AG04449 (cell line): ENCODE measurements at regions of chr2 and their contacts with region 1.

Region 1: DNA sequence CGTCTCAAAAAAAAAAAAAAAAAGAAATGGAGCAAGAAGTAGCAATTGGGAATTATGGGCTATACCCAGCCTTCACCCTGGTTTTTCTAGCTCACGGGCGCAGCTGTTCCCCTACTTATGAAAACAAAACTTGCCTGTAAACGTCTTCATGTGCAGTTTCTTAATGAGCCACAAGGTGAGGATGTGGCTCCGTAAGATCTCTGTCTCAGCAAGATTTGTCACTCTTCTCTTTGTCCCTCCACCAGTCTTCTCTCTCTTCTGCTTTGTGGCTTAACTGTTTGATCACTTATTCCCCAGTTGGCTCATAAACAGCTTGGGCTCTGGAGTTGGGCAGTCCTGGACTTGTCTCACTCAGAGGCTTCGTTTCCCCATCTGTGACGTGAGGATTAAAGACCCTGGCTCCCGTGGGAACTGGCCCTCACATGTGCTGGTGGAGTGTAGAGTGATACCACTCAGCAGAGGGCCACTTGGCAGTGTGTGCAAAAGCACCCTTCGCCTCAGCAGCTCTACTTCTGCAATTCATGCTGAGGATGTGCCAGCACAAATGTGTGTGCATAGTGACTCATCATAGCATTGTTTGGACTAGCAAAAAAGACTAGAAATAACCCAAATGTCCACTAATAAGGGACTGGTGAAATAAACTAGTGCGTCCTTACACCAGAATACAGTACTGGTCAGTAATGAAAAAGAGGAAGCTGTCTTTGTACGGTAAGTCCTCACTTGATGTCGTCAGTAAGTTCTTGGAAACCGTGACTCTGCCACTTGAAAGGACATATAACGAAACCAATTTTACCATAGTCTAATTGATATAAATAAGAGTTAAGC is 8.7 kb downstream of the CEP68 start:
- DNase-seq: peak; percentile 76
- H3K4me3 ChIP-seq: no peak overlapping the region; the same call in 1 of the 2 replicates
- CTCF ChIP-seq: peak; percentile 57

Region 2: DNA sequence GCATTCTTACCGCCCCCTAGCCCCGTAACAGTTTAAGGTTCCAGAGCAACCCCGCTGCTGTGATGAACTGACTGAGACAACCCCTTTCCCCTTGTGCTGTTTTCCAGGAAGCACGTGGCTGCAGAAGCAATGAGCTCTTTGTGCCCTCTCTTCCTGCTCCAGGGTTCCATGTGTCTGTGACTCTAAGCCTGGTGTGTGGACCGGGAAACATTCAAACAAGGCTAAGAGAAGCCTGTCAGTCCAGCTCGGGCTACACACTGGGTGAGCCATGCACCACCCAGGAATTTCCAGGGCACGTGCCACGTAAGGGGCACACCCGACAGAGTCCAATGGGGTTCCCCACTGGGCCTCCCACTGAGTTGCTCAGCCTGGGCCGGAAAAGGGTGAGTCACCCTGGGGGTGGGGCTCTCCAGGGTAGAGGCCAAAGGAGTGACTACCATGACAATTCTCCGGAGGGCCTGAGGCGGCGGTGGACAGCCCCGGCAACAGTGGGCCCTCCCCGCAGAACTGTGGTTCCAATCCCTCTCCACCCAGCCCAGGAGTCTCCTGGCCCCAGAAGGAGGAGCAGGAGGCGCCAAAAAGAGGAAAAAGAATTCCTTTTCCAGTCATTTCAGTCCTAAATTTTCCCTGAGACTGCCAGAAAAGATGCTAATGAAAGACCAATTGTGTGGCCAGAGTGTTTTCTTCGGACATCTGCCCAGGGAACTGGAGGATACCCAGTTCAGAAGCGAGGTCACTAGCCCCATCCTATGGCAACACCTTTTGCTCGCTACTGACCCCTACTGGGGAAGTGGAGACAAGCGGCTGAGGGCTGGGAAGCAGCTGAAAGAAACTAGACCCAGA is 233.6 kb before region 1 on chr2:
- CTCF ChIA-PET with region 1: no interaction called
- POLR2A ChIA-PET with region 1: no interaction called
- DNase-seq: peak; percentile 65
- H3K4me3 ChIP-seq: no peak overlapping the region
- CTCF ChIP-seq: peak; percentile 77

Region 3: DNA sequence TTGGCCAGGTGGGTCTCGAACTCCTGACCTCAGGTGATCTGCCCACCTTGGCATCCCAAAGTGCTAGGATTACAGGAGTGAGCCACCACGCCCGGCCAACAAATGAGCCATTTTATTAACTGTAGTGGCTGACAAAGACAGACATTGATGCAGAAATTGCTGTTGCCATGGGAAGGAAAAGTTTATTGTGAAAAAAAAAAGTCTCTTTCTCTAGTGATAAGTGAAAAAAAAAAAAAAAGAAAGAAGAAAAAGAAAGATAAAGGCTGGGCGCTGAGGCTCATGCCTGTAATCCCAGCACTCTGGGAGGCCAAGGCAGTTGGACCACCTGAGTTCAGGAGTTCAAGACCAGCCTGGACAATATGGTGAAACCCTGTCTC is 104.8 kb after region 1 on chr2:
- CTCF ChIA-PET with region 1: interaction called, 16 read pairs
- POLR2A ChIA-PET with region 1: no interaction called
- DNase-seq: no peak
- H3K4me3 ChIP-seq: no peak overlapping the region
- CTCF ChIP-seq: no peak